CD14-positive monocyte (primary cell): ENCODE measurements at regions of chr6 and their contacts with region 1.

Region 1: DNA sequence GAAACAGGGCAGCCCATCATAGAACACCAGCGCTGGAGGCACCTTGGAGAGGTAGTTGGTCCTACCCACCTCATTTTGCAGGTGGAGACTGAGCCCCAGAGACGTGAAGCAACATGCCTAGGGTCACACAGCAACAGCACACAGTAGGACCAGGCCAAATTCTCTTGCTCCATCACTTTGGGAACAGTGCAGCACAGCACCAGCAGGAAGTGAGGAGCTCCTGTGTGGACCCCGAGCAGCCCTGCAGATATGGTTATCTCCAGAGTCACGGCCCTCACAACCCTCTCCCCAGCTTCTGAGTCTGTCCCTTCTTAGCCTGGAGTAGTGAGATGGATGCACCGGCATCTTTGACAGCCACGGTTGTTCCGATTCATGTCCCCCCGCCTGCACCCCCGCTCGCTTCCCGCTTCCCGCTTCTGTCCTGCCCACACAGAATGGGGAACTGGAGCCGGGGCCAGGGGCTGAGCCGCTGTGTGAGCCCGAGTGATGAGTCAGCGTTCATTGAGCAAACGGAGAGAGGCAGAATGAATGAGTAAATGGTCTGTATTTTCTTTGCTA is 72.6 kb upstream of the DUSP22 start:
- DNase-seq: peak; percentile 90 to 95 (median 92)
- H3K4me3 ChIP-seq: peak overlapping the region in 1 of 3 experiments; percentile 54
- H3K4me3 Mint-ChIP-seq: peak overlapping the region; percentile 46 to 57
- H3K27ac ChIP-seq: no peak overlapping the region
- H3K27ac Mint-ChIP-seq: peak overlapping the region in 3 of 7 donors; percentile 37 to 70 (median 70)
- H3K4me1 ChIP-seq: peaks cover 34 to 41% of the 10 kb centered on the region in 2 donors
- H3K4me1 Mint-ChIP-seq: peaks cover 42% of the 10 kb centered on the region
- H3K27me3 ChIP-seq: no peaks in the 10 kb centered on the region
- H3K27me3 Mint-ChIP-seq: peaks cover 1 to 4% (median 3%) of the 10 kb centered on the region in 3 donors
- CTCF ChIP-seq: no peak

Region 2: GRCh38 chr6:188821-189655 is 30.7 kb before region 1 on chr6:
- intact Hi-C with region 1: no loop called
- DNase-seq: peak; percentile 65 to 76 (median 74)
- H3K4me3 ChIP-seq: no peak overlapping the region
- H3K4me3 Mint-ChIP-seq: no peak overlapping the region
- H3K27ac ChIP-seq: no peak overlapping the region
- H3K27ac Mint-ChIP-seq: no peak overlapping the region
- H3K4me1 ChIP-seq: peaks cover 7 to 10% of the 10 kb centered on the region in 2 donors
- H3K4me1 Mint-ChIP-seq: peaks cover 15% of the 10 kb centered on the region
- H3K27me3 ChIP-seq: no peaks in the 10 kb centered on the region
- H3K27me3 Mint-ChIP-seq: peaks cover 2 to 8% (median 4%) of the 10 kb centered on the region in 3 donors
- CTCF ChIP-seq: peak; percentile 87

Region 3: GRCh38 chr6:259901-260508 is 40.3 kb after region 1 on chr6:
- intact Hi-C with region 1: loop called in 1 of 2 experiments (anchors 5 kb)
- DNase-seq: no peak
- H3K4me3 ChIP-seq: no peak overlapping the region
- H3K4me3 Mint-ChIP-seq: no peak overlapping the region
- H3K27ac ChIP-seq: no peak overlapping the region
- H3K27ac Mint-ChIP-seq: peak overlapping the region in 1 of 7 donors; percentile 44
- H3K4me1 ChIP-seq: peaks cover 34 to 36% of the 10 kb centered on the region in 2 donors
- H3K4me1 Mint-ChIP-seq: peaks cover 36% of the 10 kb centered on the region
- H3K27me3 ChIP-seq: no peaks in the 10 kb centered on the region
- H3K27me3 Mint-ChIP-seq: peaks cover 3 to 4% (median 3%) of the 10 kb centered on the region in 3 donors
- CTCF ChIP-seq: no peak

Region 4: GRCh38 chr6:336159-337019 is 116.7 kb after region 1 on chr6:
- intact Hi-C with region 1: loop called in 1 of 2 experiments (anchors 5 kb)
- DNase-seq: peak; percentile 80 to 86 (median 84)
- H3K4me3 ChIP-seq: peak overlapping the region in 2 of 3 experiments; percentile 14 to 62
- H3K4me3 Mint-ChIP-seq: peak overlapping the region; percentile 38 to 72
- H3K27ac ChIP-seq: peak overlapping the region; percentile 84 to 87
- H3K27ac Mint-ChIP-seq: peak overlapping the region; percentile 85 to 98 (median 94)
- H3K4me1 ChIP-seq: peaks cover 88 to 92% of the 10 kb centered on the region in 2 donors
- H3K4me1 Mint-ChIP-seq: peaks cover 72% of the 10 kb centered on the region
- H3K27me3 ChIP-seq: no peaks in the 10 kb centered on the region
- H3K27me3 Mint-ChIP-seq: peaks cover 1 to 8% (median 2%) of the 10 kb centered on the region in 3 donors
- CTCF ChIP-seq: no peak

Region 5: GRCh38 chr6:364609-365540 is 145.2 kb after region 1 on chr6:
- intact Hi-C with region 1: no loop called
- DNase-seq: no peak
- H3K4me3 ChIP-seq: no peak overlapping the region
- H3K4me3 Mint-ChIP-seq: no peak overlapping the region
- H3K27ac ChIP-seq: no peak overlapping the region
- H3K27ac Mint-ChIP-seq: no peak overlapping the region
- H3K4me1 ChIP-seq: no peaks in the 10 kb centered on the region
- H3K4me1 Mint-ChIP-seq: peaks cover 2% of the 10 kb centered on the region
- H3K27me3 ChIP-seq: no peaks in the 10 kb centered on the region
- H3K27me3 Mint-ChIP-seq: peaks cover 14 to 27% (median 16%) of the 10 kb centered on the region in 3 donors
- CTCF ChIP-seq: no peak